K562 (cell line): ENCODE measurements at regions of chr1 and their contacts with region 1.

Region 1: GRCh38 chr1:22976461-22977243 is 4.0 kb upstream of the LACTBL1 start:
- DNase-seq: peak; percentile 84 to 87 (median 86)
- ATAC-seq: peak; percentile 97
- H3K4me3 ChIP-seq: no peak overlapping the region
- H3K27ac ChIP-seq: no peak overlapping the region
- H3K4me1 ChIP-seq: peaks cover 0 to 4% of the 10 kb centered on the region in 2 experiments; a peak in 2 of 5 replicates
- H3K27me3 ChIP-seq: peaks cover 8 to 20% of the 10 kb centered on the region in 2 experiments
- CTCF ChIP-seq: peak; percentile 86 to 99 (median 91)
- EP300 ChIP-seq: no peak
- POLR2A ChIP-seq: no peak
- RAD21 ChIP-seq: peak; percentile 97

Region 2: GRCh38 chr1:22527555-22528296 is 448.9 kb before region 1 on chr1:
- CTCF ChIA-PET with region 1: no interaction called
- POLR2A ChIA-PET with region 1: no interaction called
- in situ Hi-C with region 1: no loop called
- intact Hi-C with region 1: no loop called
- DNase-seq: no peak
- ATAC-seq: no peak
- H3K4me3 ChIP-seq: no peak overlapping the region
- H3K27ac ChIP-seq: no peak overlapping the region
- H3K4me1 ChIP-seq: peaks cover 0 to 2% of the 10 kb centered on the region in 2 experiments; a peak in 1 of 5 replicates
- H3K27me3 ChIP-seq: no peaks in the 10 kb centered on the region
- CTCF ChIP-seq: peak in 1 of 3 experiments; percentile 19; a peak in 1 of 6 replicates
- EP300 ChIP-seq: no peak
- POLR2A ChIP-seq: no peak
- RAD21 ChIP-seq: peak in 1 of 2 experiments; percentile 32; a peak in 1 of 4 replicates

Region 3: GRCh38 chr1:22814176-22815042 is 162.2 kb before region 1 on chr1:
- CTCF ChIA-PET with region 1: no interaction called
- POLR2A ChIA-PET with region 1: no interaction called
- in situ Hi-C with region 1: no loop called
- intact Hi-C with region 1: no loop called
- DNase-seq: no peak
- ATAC-seq: no peak
- H3K4me3 ChIP-seq: no peak overlapping the region
- H3K27ac ChIP-seq: no peak overlapping the region
- H3K4me1 ChIP-seq: peaks cover 0 to 3% of the 10 kb centered on the region in 2 experiments; a peak in 1 of 5 replicates
- H3K27me3 ChIP-seq: peaks cover 2 to 33% of the 10 kb centered on the region in 2 experiments; a peak in 4 of 5 replicates
- CTCF ChIP-seq: no peak
- EP300 ChIP-seq: no peak
- POLR2A ChIP-seq: no peak
- RAD21 ChIP-seq: no peak

Region 4: DNA sequence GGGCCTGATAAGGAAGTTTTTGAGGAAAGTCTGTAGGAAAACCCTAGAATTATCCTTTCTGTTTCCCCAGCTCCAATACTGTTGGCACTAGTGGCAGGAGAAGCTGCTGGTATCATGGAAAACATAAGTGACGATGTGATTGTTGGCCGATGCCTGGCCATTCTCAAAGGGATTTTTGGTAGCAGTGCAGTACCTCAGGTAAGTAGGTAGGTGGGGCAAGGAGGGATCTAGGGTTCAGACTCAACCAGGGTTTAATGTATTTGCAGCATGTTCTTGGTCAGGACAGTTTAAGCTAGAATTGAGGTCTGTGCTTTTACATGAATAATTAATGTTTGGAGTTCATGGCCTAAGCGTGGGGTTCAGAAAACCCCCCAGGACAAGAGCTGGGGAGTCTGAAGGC is 104.7 kb after region 1 on chr1:
- CTCF ChIA-PET with region 1: no interaction called
- POLR2A ChIA-PET with region 1: no interaction called
- in situ Hi-C with region 1: no loop called
- intact Hi-C with region 1: loop called (anchors 5 kb)
- DNase-seq: no peak
- ATAC-seq: peak; percentile 64
- H3K4me3 ChIP-seq: no peak overlapping the region
- H3K27ac ChIP-seq: no peak overlapping the region
- H3K4me1 ChIP-seq: no peaks in the 10 kb centered on the region
- H3K27me3 ChIP-seq: no peaks in the 10 kb centered on the region
- CTCF ChIP-seq: peak; percentile 33 to 44 (median 36); a peak in 4 of 6 replicates
- EP300 ChIP-seq: no peak
- POLR2A ChIP-seq: no peak; the same call in 1 of the 2 replicates
- RAD21 ChIP-seq: 0 out of 4 replicates have a peak, but pooled peaks of 1 of the 2 experiments have one; percentile 28

Region 5: DNA sequence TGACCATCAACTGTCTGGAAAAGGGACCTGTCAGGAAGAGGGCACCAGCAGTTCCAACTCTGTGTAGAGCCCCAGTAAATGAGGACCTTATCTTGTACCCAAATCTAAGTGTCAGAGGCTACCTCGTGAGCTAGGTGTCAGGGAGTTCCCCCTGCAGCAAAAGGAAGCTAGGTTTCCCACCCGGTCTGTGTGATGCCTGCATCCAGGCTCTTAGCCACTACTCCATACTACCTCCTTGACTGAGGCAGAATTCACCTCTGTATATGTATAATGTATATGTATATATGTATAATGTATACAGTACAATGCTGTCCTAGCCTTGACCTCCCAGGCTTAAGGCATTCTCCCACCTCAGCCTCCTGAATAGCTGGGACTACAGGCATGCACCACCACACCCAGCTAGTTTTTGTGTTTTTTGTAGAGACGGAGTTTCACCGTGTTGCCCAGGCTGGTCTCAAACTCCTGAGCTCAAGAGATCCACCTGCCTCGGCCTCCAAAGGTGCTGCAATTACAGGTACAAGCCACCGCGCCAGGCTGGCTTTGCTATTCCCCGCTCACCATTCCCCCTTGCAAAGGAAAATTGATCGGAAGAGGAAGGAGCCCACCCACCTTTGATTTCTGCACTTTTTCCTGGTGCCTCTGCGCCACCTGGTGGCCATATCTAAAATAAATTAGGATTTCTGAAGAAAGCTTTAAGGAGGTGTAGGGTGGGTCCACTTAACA is 207.7 kb after region 1 on chr1:
- CTCF ChIA-PET with region 1: interaction called, 55 read pairs
- POLR2A ChIA-PET with region 1: interaction called, 4 read pairs
- in situ Hi-C with region 1: loop called (anchors 5 kb)
- intact Hi-C with region 1: loop called (anchors 1 kb)
- DNase-seq: peak; percentile 66 to 72 (median 67)
- ATAC-seq: peak; percentile 73
- H3K4me3 ChIP-seq: no peak overlapping the region
- H3K27ac ChIP-seq: no peak overlapping the region
- H3K4me1 ChIP-seq: no peaks in the 10 kb centered on the region; a peak in 2 of 5 replicates
- H3K27me3 ChIP-seq: peaks cover 3 to 4% of the 10 kb centered on the region in 2 experiments; a peak in 2 of 5 replicates
- CTCF ChIP-seq: peak; percentile 81 to 90 (median 83)
- EP300 ChIP-seq: no peak
- POLR2A ChIP-seq: no peak
- RAD21 ChIP-seq: peak; percentile 98 to 99

Region 6: GRCh38 chr1:23282957-23283356 is 306.3 kb after region 1 on chr1:
- CTCF ChIA-PET with region 1: no interaction called
- POLR2A ChIA-PET with region 1: no interaction called
- in situ Hi-C with region 1: loop called (anchors 5 kb)
- intact Hi-C with region 1: loop called (anchors 5 kb)
- DNase-seq: no peak
- ATAC-seq: no peak
- H3K4me3 ChIP-seq: no peak overlapping the region
- H3K27ac ChIP-seq: no peak overlapping the region
- H3K4me1 ChIP-seq: no peaks in the 10 kb centered on the region
- H3K27me3 ChIP-seq: no peaks in the 10 kb centered on the region
- CTCF ChIP-seq: no peak
- EP300 ChIP-seq: no peak
- POLR2A ChIP-seq: no peak
- RAD21 ChIP-seq: no peak